Endothelial cell of umbilical vein (primary cell): ENCODE measurements at regions of chr4 and their contacts with region 1.

Region 1: GRCh38 chr4:1910643-1911042 is 39.5 kb downstream of the NSD2 start:
- DNase-seq: peak; percentile 65
- H3K4me3 ChIP-seq: no peak overlapping the region
- H3K27ac ChIP-seq: no peak overlapping the region
- H3K4me1 ChIP-seq: no peaks in the 10 kb centered on the region
- H3K27me3 ChIP-seq: no peaks in the 10 kb centered on the region
- CTCF ChIP-seq: peak; percentile 51 to 74
- POLR2A ChIP-seq: no peak

Region 2: GRCh38 chr4:1693129-1693896 is 217.3 kb before region 1 on chr4:
- CTCF ChIA-PET with region 1: interaction called, 12 read pairs
- POLR2A ChIA-PET with region 1: no interaction called
- dilution Hi-C with region 1: no loop called
- intact Hi-C with region 1: no loop called
- DNase-seq: peak; percentile 78
- H3K4me3 ChIP-seq: no peak overlapping the region
- H3K27ac ChIP-seq: no peak overlapping the region
- H3K4me1 ChIP-seq: no peaks in the 10 kb centered on the region
- H3K27me3 ChIP-seq: no peaks in the 10 kb centered on the region
- CTCF ChIP-seq: peak; percentile 94 to 95
- POLR2A ChIP-seq: no peak

Region 3: DNA sequence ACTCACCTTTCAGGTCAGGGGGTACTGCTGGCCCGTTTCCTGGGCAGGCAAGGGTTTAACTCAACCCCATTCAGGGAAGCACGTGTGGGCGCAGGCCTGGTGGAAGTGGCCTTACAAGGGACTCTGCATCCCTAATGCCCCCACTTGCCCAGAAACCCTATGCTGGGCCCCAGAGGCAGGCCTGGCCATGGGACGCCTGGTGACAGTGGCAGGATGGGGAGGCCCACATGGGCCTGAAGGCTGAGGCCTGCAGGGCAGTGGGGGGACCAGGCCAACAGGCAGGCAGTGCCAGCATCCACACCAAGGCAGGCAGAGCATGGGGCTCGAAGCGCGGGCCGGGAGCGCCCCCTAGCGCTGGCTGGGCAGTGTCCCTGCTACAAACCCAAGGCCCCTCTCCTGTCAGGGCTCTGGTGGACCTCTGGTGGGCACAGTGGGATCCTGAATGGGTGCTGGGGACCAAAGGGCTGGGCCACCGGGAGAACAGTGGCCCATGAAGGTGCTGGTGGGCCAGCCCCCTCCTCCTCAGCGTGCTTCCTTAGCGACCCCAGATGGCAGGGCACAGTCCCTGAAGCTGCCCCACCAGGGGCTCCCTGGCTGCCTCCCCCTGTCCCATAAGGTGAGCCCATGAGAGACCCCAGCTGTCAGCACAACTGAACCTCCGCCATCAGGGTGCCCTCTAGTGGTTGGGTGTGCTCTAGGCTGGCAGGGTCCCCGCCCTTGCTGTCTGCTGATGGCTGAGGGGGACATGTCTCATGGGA is 100.7 kb before region 1 on chr4:
- CTCF ChIA-PET with region 1: interaction called, 13 read pairs
- POLR2A ChIA-PET with region 1: no interaction called
- dilution Hi-C with region 1: no loop called
- intact Hi-C with region 1: loop called (anchors 5 kb)
- DNase-seq: peak; percentile 66
- H3K4me3 ChIP-seq: no peak overlapping the region
- H3K27ac ChIP-seq: no peak overlapping the region
- H3K4me1 ChIP-seq: no peaks in the 10 kb centered on the region
- H3K27me3 ChIP-seq: no peaks in the 10 kb centered on the region
- CTCF ChIP-seq: peak; percentile 97 to 99
- POLR2A ChIP-seq: no peak

Region 4: DNA sequence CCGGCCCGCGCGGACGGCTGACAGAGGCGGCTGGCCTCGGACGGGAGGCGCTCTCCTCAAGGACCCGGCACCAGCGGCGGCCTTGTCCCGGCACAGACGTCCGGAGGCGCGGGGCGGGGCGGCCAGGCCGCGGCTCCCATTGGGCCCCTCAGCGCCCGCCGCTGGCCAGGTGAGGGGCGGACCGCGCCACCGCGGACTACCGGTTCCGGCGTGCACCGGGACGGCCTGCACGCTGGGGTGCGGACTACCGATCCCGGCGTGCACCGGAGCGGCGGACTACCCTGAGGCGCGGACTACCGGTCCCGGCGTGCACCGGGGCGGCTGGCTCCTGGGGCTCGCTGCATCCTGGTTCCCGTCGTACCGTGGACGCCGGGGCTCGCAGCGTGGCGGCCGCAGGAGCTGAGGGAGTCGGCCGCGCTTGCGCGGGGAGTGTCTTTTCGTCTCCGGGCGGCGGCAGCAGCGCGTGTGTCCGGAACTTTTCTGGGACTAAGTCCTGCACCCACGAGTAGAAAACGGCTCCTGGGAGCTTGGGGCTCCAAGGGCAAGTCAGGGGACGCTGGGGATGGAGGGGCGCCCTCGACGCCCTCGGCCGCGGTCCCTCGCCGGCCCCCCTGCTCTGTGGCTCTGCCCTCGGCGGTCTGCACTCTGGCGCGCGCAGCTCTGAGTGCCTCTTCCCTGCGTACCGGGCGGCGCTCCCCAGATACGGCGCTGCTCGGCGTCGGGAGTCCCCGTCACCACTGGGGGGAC is 54.4 kb before region 1 on chr4 and contains the start of gene LETM1:
- CTCF ChIA-PET with region 1: interaction called, 9 read pairs
- POLR2A ChIA-PET with region 1: no interaction called
- dilution Hi-C with region 1: no loop called
- intact Hi-C with region 1: loop called (anchors 1 kb)
- DNase-seq: peak; percentile 90
- H3K4me3 ChIP-seq: peak within 1 kb of the TSS; percentile 44 to 88 (median 83)
- H3K27ac ChIP-seq: peak within 1 kb of the TSS; percentile 28
- H3K4me1 ChIP-seq: peaks cover 17% of the 10 kb centered on the region
- H3K27me3 ChIP-seq: no peaks in the 10 kb centered on the region
- CTCF ChIP-seq: peak; percentile 8 to 20
- POLR2A ChIP-seq: peak; percentile 66
- total RNA-seq, gene LETM1: 58.3 and 62.5 TPM in 2 replicates

Region 5: DNA sequence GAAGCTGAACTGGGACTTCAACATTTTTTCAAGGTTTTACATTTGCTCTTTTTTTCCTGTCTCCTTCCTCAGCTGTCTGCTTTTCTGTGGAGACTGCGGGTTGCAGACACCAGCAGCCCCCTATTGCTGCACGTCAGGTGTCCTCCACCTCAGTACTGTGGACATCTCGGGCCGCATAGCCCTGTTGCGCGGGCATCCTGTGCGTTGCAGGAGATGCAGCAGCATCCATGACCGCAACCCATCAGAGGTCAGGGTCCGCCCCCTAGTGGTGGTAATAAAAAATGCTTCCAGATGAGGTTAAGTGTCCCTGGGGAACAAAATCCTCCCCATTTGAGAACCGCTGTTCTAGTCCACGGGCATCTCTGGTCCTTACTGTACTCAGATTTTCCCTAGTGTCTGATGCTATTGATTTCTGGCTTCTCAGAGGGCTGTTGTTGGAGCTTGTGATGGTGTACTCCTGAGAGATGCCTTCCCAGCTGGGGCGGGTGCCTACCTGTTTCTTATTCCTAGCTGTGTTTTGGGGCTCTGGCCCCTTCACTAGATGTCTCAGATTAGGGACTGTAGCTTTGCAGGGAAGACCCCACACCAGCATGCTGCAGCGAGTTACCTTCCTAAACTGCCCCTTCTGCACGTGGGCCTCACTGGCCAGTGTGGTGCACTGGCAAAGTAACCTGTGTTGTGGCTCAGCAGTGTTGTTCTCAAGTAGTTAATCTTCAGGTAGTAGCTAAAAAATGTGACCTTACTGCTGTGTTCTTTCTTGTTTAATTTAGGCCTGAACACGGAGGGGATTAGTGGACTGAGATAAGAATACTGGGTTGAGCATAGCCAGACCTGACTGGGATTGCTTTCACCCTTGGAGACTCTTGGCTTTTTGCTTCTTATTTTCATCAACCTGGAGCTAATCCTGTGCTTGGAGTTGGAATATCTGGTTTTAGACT is 11.2 kb before region 1 on chr4:
- CTCF ChIA-PET with region 1: interaction called, 43 read pairs
- POLR2A ChIA-PET with region 1: no interaction called
- dilution Hi-C with region 1: no loop called
- intact Hi-C with region 1: no loop called
- DNase-seq: peak; percentile 74
- H3K4me3 ChIP-seq: no peak overlapping the region
- H3K27ac ChIP-seq: no peak overlapping the region
- H3K4me1 ChIP-seq: peaks cover 5% of the 10 kb centered on the region
- H3K27me3 ChIP-seq: no peaks in the 10 kb centered on the region
- CTCF ChIP-seq: peak; percentile 79 to 94
- POLR2A ChIP-seq: no peak

Region 6: GRCh38 chr4:2071912-2072867 is 161.5 kb after region 1 on chr4:
- CTCF ChIA-PET with region 1: no interaction called
- POLR2A ChIA-PET with region 1: no interaction called
- dilution Hi-C with region 1: no loop called
- intact Hi-C with region 1: no loop called
- DNase-seq: no peak
- H3K4me3 ChIP-seq: no peak overlapping the region
- H3K27ac ChIP-seq: no peak overlapping the region
- H3K4me1 ChIP-seq: no peaks in the 10 kb centered on the region
- H3K27me3 ChIP-seq: no peaks in the 10 kb centered on the region
- CTCF ChIP-seq: no peak
- POLR2A ChIP-seq: no peak